ENCODE measurements at regions of chr6 and their contacts with region 1.

Region 1: DNA sequence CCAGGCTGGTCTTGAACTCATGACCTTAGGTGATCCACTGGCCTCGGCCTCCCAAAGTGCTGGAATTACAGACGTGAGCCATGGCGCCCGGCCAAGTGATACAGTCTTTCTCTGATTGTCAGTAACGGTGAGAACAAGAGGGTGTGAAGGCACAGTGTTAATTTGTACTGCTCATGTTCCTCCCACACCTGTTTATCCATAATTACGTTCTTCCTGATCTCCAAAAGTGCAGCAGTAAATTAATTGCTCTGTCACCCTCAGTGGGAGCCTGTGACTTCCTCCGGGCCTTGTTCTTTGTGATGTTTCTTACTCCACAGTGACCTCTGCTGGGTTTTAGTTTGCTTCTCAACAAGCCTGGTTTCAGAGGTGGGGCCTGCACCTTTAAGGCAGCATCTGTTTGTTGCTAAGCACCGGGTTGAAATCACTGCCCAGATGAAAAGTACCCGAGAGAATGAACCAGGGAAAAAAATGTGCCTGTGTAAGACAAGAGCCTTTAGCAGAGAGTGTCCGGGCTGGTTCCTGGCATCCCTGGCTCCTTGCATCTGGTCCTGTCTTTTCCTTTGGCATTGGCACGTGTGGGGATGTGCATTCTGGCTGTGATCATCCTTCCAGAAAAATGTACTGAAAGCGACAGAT is 89.1 kb upstream of the CLDN20 start:
- DNase-seq: peak; percentile 69
- CTCF ChIP-seq: peak; percentile 51

Region 2: GRCh38 chr6:154675602-154676088 is 499.0 kb before region 1 on chr6:
- in situ Hi-C with region 1: loop called (anchors 10 kb)
- DNase-seq: peak; percentile 88
- CTCF ChIP-seq: peak; percentile 98

Region 3: DNA sequence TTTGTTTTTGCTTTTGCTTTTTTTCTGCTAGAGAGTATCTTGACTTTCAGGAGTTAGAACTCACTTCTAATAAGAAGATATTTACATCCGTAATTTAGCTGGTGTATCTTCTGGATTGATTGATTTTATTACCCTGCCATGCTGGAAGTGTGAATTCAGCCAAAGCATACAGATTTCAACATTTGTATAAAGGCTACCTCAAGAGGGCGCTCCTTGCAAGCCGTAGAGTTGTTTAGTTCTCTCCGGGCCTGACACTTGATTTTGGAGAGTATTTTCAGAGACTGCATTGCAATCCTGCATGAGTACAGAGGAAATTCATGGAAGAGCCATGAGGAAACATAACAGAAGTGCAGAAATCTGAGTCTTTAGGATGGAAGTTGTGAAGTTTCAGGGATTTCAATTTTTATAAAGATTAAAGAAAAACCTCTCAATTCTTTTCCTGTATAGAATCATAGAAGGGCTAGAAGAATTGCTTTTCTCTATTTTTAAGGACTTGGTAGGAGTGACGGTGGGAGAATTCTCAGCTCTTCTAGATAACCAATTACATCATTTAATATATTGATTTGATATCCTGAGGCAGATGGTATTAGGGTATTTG is 246.3 kb before region 1 on chr6:
- in situ Hi-C with region 1: loop called (anchors 5 kb)
- DNase-seq: peak; percentile 75
- CTCF ChIP-seq: peak; percentile 58

Region 4: DNA sequence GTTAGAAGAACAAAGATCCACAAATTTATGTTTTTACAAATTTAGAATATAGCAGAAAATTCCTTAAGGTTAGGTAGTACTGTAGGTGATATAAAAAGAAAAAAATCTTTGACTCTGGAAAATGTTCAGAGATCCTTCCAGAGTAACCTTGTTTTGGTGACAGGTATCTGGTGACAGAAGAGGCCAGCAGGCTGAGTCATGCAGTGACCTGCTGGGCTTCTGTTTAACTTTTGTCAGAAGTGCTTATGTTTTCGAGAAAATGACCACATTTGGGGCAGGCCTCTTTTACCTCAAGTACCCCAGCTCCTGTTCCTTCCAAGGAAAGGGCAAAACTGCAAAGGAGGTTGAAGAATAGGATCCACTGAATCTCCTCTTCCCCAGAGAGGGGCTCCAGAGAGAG is 78.6 kb after region 1 on chr6:
- in situ Hi-C with region 1: loop called (anchors 5 kb)
- DNase-seq: no peak
- CTCF ChIP-seq: no peak

Region 5: DNA sequence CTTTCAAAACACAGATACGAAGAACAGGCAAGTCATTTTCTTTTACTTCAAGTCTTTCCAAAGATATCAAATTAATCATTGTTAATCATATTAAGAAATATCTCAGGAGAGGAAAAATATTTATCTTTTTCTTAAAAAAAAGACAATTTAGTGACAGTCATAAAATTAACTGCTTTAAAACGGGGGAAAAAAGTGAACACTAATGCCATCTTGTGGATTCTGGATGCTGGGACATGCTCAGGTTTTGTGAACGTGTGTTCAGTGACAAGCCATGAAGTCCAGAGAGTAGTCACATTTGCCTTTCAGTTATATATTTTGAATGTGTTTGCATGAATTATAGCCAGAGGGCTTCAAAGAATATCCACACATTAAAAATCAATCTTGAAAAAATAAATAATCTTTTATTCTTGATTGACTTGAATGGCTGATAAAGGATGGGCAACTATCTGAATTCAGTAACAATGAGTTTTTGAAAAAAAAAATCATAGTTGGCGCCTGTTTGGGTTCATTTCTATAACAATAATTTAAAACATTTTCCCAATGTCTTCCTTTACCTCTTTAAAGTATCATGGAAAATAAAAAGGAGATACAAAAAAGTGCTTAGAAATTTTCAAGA is 355.6 kb after region 1 on chr6:
- in situ Hi-C with region 1: loop called (anchors 25 kb)
- DNase-seq: peak; percentile 37
- CTCF ChIP-seq: peak; percentile 46